CD4-positive, alpha-beta memory T cell (primary cell): ENCODE measurements at regions of chr5 and their contacts with region 1.

Region 1: DNA sequence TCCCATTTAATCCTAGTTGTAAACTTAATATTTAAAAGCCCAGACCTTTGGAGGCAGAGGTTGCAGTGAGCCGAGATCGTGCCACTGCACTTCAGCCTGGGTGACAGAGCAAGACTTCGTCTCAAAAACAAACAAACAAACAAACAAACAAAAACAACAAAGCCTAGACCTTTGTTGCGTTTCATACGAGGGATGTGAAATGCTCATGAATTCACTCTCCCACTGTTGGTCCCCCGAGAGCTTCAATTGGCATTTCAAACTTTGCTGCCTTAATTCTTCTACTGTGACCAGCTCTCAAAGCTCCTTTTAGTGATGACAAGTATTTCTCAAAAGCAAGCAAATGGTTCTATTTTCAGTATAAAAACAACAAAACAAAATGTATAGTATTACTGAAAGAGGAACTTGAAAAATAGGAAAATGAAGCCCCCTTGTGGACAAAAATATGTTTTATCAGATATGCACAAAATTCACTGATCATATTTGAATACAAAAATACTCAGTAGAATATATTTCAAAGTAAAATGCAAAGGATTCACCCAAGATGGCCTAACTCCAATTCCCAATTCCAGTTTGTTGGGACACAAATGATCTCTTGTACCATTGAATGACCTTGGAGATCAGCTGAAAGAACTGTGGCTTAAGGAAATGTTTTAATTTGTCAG is 140.4 kb downstream of the ESM1 start:
- DNase-seq: peak in 4 of 5 donors; percentile 54 to 63 (median 56)
- H3K4me3 ChIP-seq: no peak overlapping the region
- H3K4me3 Mint-ChIP-seq: peak overlapping the region in 5 of 8 donors; percentile 9 to 68 (median 49)
- H3K27ac ChIP-seq: no peak overlapping the region
- H3K27ac Mint-ChIP-seq: peak overlapping the region in 2 of 7 donors; percentile 12 to 26
- H3K4me1 ChIP-seq: no peaks in the 10 kb centered on the region
- H3K4me1 Mint-ChIP-seq: peaks cover 0 to 4% (median 2%) of the 10 kb centered on the region in 4 donors
- H3K27me3 ChIP-seq: no peaks in the 10 kb centered on the region
- H3K27me3 Mint-ChIP-seq: peaks cover 0 to 9% of the 10 kb centered on the region in 2 donors

Region 2: DNA sequence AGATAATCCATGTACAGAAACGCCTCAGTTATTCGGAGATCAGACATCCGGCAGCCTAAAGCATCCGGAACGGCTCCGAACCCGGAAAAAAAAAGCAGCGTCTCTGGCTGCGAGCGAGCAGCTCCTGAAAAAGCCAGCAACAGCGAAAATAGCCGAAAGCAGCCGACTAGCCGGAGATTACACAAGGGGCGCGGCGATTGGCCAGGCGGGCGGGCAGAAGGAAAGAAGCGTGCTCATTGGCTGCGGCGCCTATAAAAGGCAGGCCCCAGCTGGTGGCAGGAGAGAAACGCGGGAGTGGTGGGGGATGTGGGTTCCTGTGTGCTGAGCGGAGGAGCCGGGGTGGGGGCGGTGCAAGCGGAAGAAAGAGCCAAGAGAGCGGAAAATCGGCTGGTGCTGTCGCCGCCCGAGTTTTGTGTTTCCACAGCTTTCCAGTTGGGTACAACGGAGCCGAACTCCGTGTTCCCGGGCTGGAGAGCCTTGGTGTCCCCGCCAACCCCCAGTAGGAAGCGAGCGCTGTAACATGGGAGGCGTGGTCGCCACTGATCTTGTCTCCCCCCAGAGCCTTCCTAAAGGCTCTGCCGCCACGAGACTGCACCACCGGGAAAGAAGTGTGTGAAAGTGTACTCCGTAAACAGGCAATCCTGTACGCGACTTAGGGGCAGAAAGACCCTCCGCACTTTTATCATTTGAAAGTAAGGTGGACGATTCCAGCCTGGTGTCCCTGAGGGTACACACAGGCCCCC is 534.4 kb before region 1 on chr5 and contains the start of gene ARL15:
- CTCF ChIA-PET with region 1: no interaction called
- POLR2A ChIA-PET with region 1: no interaction called
- intact Hi-C with region 1: loop called (anchors 2 kb)
- DNase-seq: peak; percentile 98
- H3K4me3 ChIP-seq: peak within 1 kb of the TSS; percentile 84 to 96
- H3K4me3 Mint-ChIP-seq: peak within 1 kb of the TSS; percentile 91 to 99 (median 97)
- H3K27ac ChIP-seq: peak within 1 kb of the TSS; percentile 86
- H3K27ac Mint-ChIP-seq: peak within 1 kb of the TSS; percentile 94 to 98 (median 96)
- H3K4me1 ChIP-seq: peaks cover 16% of the 10 kb centered on the region
- H3K4me1 Mint-ChIP-seq: peaks cover 12 to 35% (median 26%) of the 10 kb centered on the region in 4 donors
- H3K27me3 ChIP-seq: no peaks in the 10 kb centered on the region
- H3K27me3 Mint-ChIP-seq: peaks cover 7 to 8% of the 10 kb centered on the region in 2 donors
- total RNA-seq, gene ARL15: 14.1 to 15.3 TPM

Region 3: DNA sequence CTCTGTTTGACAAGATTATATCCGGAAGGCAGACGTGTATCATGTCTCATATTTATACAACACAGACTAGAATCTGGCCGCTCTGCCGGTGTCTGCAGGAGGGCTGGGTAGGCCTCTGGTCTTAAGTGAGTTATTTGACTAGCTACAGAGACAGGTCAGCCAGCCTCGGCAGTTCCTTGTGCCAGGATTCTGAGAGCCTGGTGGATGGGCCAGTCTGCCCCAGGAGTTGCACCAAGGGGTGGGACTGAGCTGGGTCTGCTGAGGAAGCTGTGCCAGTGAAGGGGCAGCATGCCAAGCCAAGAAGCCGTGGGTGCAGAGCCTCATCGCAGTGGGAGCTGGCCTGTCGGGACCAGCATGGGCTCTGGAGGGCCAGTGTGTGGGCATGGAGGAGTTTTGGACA is 320.3 kb before region 1 on chr5:
- CTCF ChIA-PET with region 1: interaction called, 181 read pairs
- POLR2A ChIA-PET with region 1: interaction called, 4 read pairs
- intact Hi-C with region 1: no loop called
- DNase-seq: no peak
- H3K4me3 ChIP-seq: no peak overlapping the region
- H3K4me3 Mint-ChIP-seq: peak overlapping the region in 3 of 8 donors; percentile 44 to 55 (median 45)
- H3K27ac ChIP-seq: no peak overlapping the region
- H3K27ac Mint-ChIP-seq: peak overlapping the region in 1 of 7 donors; percentile 37
- H3K4me1 ChIP-seq: peaks cover 88% of the 10 kb centered on the region
- H3K4me1 Mint-ChIP-seq: peaks cover 0 to 52% (median 24%) of the 10 kb centered on the region in 4 donors
- H3K27me3 ChIP-seq: no peaks in the 10 kb centered on the region
- H3K27me3 Mint-ChIP-seq: no peaks in the 10 kb centered on the region

Region 4: DNA sequence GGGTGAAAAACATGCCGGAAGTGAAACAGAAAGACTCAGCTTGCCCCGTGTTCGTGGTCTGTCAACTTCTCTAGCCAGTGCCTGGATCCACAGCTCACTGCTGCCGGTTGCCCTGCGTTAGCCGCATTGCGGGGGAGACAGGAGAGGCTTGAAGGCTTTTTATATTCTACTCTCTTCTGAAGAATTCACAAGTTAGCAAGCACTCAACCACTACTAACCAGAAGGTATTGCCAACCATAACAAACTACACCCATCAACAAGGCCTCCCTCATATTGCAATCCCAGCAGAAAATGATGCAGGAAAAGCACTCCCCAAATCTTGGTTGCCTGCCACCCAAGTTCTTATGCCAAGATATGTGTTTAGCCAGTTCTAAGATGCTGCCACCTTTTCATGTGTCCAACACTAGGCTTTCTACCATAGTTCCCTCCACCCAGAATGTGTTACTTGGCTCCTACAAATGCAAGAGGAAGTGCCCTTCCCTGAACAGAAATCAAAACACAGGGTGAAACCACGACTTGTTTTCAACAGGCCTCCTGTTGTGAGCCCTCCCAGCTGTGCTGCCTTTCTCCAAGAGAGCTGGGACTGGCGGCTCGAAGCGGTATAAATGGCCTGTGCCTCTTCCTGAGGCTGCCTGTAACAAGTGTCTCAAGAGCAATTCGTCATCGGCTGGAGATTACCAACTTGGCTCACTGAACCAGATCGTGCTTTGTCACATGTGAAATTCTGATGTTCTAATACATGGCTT is 198.5 kb before region 1 on chr5:
- CTCF ChIA-PET with region 1: interaction called, 21 read pairs
- POLR2A ChIA-PET with region 1: no interaction called
- intact Hi-C with region 1: loop called (anchors 10 kb)
- DNase-seq: peak; percentile 60 to 69 (median 61)
- H3K4me3 ChIP-seq: peak overlapping the region; percentile 31 to 50
- H3K4me3 Mint-ChIP-seq: peak overlapping the region; percentile 72 to 83 (median 76)
- H3K27ac ChIP-seq: peak overlapping the region; percentile 30
- H3K27ac Mint-ChIP-seq: peak overlapping the region; percentile 87 to 95 (median 91)
- H3K4me1 ChIP-seq: peaks cover 53% of the 10 kb centered on the region
- H3K4me1 Mint-ChIP-seq: peaks cover 38 to 64% (median 53%) of the 10 kb centered on the region in 4 donors
- H3K27me3 ChIP-seq: no peaks in the 10 kb centered on the region
- H3K27me3 Mint-ChIP-seq: no peaks in the 10 kb centered on the region

Region 5: DNA sequence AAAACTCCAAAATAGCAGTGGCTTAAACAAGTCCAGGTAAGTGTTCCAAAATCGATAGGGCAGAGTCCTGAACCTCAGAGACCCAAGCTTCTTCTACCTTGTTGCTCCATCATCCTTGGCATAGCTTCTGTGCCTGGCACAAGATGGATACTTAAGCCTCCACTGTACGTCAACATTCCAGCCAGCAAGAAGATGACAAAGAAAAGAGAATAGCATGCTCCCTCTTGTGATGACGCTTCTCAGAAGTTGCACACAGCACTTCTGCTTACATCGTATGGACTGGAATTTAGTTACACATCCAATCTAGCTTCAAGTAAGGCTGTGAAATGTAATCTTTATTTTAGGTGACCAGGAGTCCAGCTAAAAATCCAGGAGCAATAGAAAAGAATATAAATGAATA is 87.0 kb before region 1 on chr5:
- CTCF ChIA-PET with region 1: interaction called, 14 read pairs
- POLR2A ChIA-PET with region 1: interaction called, 3 read pairs
- intact Hi-C with region 1: no loop called
- DNase-seq: no peak
- H3K4me3 ChIP-seq: no peak overlapping the region
- H3K4me3 Mint-ChIP-seq: no peak overlapping the region
- H3K27ac ChIP-seq: no peak overlapping the region
- H3K27ac Mint-ChIP-seq: no peak overlapping the region
- H3K4me1 ChIP-seq: peaks cover 20% of the 10 kb centered on the region
- H3K4me1 Mint-ChIP-seq: peaks cover 17 to 30% (median 24%) of the 10 kb centered on the region in 4 donors
- H3K27me3 ChIP-seq: no peaks in the 10 kb centered on the region
- H3K27me3 Mint-ChIP-seq: no peaks in the 10 kb centered on the region

Region 6: GRCh38 chr5:54832858-54833257 is 12.2 kb before region 1 on chr5:
- CTCF ChIA-PET with region 1: interaction called, 34 read pairs
- POLR2A ChIA-PET with region 1: no interaction called
- intact Hi-C with region 1: no loop called
- DNase-seq: no peak
- H3K4me3 ChIP-seq: no peak overlapping the region
- H3K4me3 Mint-ChIP-seq: no peak overlapping the region
- H3K27ac ChIP-seq: no peak overlapping the region
- H3K27ac Mint-ChIP-seq: peak overlapping the region in 3 of 7 donors; percentile 47 to 78 (median 54)
- H3K4me1 ChIP-seq: peaks cover 12% of the 10 kb centered on the region
- H3K4me1 Mint-ChIP-seq: peaks cover 10 to 18% (median 11%) of the 10 kb centered on the region in 4 donors
- H3K27me3 ChIP-seq: no peaks in the 10 kb centered on the region
- H3K27me3 Mint-ChIP-seq: peaks cover 1 to 2% of the 10 kb centered on the region in 2 donors

Region 7: DNA sequence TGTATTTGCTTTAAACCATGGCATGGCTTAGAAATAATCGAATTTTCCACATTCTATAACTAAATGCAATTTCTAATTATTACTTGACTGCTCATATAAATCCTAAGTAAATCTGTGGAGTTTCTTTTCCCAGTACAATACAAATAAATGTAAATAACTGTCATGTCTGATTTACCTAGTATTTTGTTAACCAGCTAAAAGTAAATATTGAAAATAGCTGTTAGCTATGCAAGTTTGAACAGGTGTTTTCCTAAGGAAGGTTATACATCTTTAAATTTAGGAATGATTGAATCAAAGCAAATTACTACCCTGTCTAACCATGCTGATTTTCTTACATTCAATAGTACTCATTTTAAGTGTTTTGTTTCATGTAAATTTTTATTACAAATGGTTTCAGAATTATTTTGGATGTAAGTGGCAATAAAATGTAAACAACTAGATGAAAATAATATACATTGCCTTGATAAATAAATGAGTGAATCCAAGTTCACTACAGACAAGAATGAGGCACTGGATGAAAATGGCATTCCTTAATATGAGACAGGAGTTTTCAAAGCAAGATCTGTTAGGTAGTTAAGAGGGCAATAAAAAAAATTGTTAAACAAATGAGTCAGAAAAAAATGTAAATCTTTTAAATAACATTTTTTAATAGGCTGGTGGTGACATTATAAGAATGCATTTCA is 366.3 kb after region 1 on chr5:
- CTCF ChIA-PET with region 1: no interaction called
- POLR2A ChIA-PET with region 1: no interaction called
- intact Hi-C with region 1: no loop called
- DNase-seq: no peak
- H3K4me3 ChIP-seq: no peak overlapping the region
- H3K4me3 Mint-ChIP-seq: no peak overlapping the region
- H3K27ac ChIP-seq: no peak overlapping the region
- H3K27ac Mint-ChIP-seq: no peak overlapping the region
- H3K4me1 ChIP-seq: no peaks in the 10 kb centered on the region
- H3K4me1 Mint-ChIP-seq: peaks cover 0 to 2% (median 0%) of the 10 kb centered on the region in 4 donors
- H3K27me3 ChIP-seq: no peaks in the 10 kb centered on the region
- H3K27me3 Mint-ChIP-seq: peaks cover 8 to 10% of the 10 kb centered on the region in 2 donors